Naive thymus-derived CD8-positive, alpha-beta T cell (primary cell): ENCODE measurements at regions of chr9 and their contacts with region 1.

Region 1: DNA sequence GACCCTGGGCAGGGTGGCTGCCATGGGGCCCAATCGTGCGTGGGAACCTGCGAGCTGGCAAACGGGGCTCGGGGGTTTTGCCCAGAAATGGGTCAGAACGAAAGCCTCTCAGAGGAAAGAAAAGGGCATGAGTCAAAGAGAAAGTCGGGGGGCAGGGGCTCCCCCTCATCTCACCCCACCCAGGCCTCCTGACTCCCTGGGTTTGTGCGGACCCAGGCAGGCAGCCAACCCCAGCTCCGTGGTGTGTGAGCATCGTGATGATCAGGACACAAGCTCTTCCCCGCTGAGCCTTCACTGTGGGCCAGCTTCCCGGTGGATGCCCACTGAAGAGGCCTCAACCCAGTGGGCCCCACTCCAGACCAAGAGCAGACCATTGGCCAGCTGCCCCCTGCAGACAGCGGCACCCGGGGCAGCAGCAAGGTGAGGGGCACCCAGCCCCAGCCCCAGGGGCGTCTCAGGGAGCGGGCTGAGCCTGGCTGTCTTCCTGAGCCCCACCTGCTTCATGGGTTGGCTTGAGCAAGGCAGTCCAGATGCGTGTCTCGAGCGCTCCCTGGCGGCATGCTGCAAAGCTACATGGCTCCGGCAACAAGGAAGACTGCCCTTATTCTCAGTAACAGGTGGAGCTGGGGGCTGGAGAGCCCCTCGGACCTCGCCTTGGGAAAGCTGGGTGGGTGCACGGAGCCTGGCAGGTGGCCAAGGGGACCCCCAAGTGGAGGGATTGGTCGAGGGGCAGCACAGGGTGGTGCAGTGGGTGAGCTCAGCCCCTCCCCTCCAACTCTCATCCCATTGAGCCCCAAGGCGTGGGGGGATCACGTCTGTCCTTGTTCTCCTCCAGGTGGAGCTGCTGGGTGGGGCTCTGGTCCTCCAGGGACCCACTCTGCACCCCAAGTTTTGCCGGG is 3.2 kb upstream of the FUT7 start:
- DNase-seq: peak; percentile 77 to 93 (median 86)
- ATAC-seq: peak; percentile 84 to 89
- H3K4me3 Mint-ChIP-seq: peak overlapping the region; percentile 65 to 89 (median 78)
- H3K27ac Mint-ChIP-seq: peak overlapping the region; percentile 19 to 88 (median 74)
- H3K4me1 Mint-ChIP-seq: peaks cover 19 to 50% (median 43%) of the 10 kb centered on the region in 4 donors
- H3K27me3 Mint-ChIP-seq: peaks cover 0 to 2% (median 0%) of the 10 kb centered on the region in 5 donors

Region 2: GRCh38 chr9:136820971-136821825 is 213.9 kb before region 1 on chr9:
- POLR2A ChIA-PET with region 1: no interaction called
- DNase-seq: peak in 1 of 10 donors; percentile 43
- ATAC-seq: no peak
- H3K4me3 Mint-ChIP-seq: peak overlapping the region in 5 of 10 donors; percentile 14 to 63 (median 31)
- H3K27ac Mint-ChIP-seq: peak overlapping the region in 1 of 10 donors; percentile 78
- H3K4me1 Mint-ChIP-seq: peaks cover 7 to 20% (median 11%) of the 10 kb centered on the region in 4 donors
- H3K27me3 Mint-ChIP-seq: no peaks in the 10 kb centered on the region

Region 3: DNA sequence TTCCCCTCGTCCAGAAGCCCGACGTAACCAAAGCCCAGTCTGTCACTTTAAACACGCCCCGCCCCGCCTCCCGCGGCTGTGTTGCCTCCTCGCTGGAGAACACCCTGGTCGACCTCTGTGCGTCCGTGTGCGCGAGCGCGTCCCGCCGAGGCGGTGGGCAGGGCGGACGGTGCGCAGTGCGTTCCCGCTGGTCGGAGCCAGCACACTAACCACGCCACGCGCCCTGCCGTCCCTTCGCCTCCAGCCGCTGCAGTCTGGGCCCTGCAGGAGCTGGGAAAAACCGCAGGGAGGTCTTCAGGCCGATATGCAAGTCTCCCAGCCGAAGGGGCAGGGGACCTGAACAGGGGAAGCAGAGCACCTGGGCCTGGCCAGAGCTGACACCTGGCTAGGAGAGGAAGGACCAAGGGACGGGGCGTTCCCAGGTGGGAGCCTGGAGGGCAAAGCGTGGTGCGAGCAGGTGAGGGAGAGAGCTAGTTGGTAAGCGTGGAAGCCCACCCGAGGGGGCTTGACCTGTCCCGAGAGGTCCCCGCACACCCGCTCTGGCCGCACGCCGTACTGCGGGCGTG is 187.2 kb before region 1 on chr9:
- POLR2A ChIA-PET with region 1: interaction called, 17 read pairs
- DNase-seq: peak; percentile 27 to 78 (median 50)
- ATAC-seq: no peak
- H3K4me3 Mint-ChIP-seq: peak overlapping the region; percentile 63 to 91 (median 86)
- H3K27ac Mint-ChIP-seq: peak overlapping the region in 4 of 10 donors; percentile 72 to 90 (median 76)
- H3K4me1 Mint-ChIP-seq: peaks cover 5 to 23% (median 17%) of the 10 kb centered on the region in 4 donors
- H3K27me3 Mint-ChIP-seq: peaks cover 0 to 27% (median 2%) of the 10 kb centered on the region in 5 donors

Region 4: GRCh38 chr9:136949817-136950655 is 85.1 kb before region 1 on chr9:
- POLR2A ChIA-PET with region 1: interaction called, 14 read pairs
- DNase-seq: peak; percentile 94 to 99 (median 96)
- ATAC-seq: peak; percentile 96 to 98
- H3K4me3 Mint-ChIP-seq: peak overlapping the region; percentile 77 to 93 (median 86)
- H3K27ac Mint-ChIP-seq: peak overlapping the region; percentile 67 to 96 (median 90)
- H3K4me1 Mint-ChIP-seq: peaks cover 6 to 18% (median 17%) of the 10 kb centered on the region in 4 donors
- H3K27me3 Mint-ChIP-seq: no peaks in the 10 kb centered on the region